Heart left ventricle (tissue), 16 donors: ENCODE measurements at regions of chr4 and their contacts with region 1.

Region 1: GRCh38 chr4:140109737-140110136 is 44.2 kb downstream of the MAML3 start:
- DNase-seq: no peak
- ATAC-seq: no peak
- H3K4me3 ChIP-seq: no peak overlapping the region
- H3K27ac ChIP-seq: no peak overlapping the region
- H3K4me1 ChIP-seq: no peaks in the 10 kb centered on the region
- H3K27me3 ChIP-seq: no peaks in the 10 kb centered on the region
- CTCF ChIP-seq: no peak
- POLR2A ChIP-seq: no peak

Region 2: DNA sequence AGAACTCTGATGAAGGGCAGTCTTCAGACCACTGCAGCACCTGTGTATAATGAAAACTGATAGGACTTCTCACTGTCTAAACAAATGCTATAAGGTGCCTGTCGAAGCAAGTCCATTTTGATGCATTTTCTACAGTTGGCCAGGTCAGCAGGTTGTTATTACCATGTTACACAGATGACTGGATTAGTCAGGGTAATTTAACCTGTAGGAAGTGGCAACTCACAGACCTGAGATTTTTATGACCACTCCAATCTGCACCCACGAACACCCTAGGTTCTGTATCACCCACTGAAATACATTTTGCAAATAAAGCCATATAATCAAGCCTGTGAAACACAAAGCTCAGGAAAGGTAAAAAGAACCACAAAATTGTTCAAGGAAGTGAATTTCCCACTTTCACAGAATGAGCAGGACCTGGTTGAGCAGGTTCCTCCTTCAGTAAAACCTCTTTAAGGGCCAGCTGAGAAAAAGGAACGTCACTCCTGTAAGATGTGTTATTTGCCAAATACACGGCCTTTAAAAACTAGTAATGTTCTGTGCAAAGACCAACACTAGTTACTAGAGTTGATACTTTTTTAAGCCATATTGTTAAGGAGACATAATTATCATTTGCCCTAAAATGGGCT is 31.6 kb after region 1 on chr4:
- intact Hi-C with region 1: loop called in 1 of 10 experiments (anchors 5 kb)
- DNase-seq: no peak
- ATAC-seq: no peak
- H3K4me3 ChIP-seq: no peak overlapping the region
- H3K27ac ChIP-seq: no peak overlapping the region
- H3K4me1 ChIP-seq: peaks cover 0 to 6% (median 0%) of the 10 kb centered on the region in 12 donors
- H3K27me3 ChIP-seq: no peaks in the 10 kb centered on the region
- CTCF ChIP-seq: no peak
- POLR2A ChIP-seq: no peak

Region 3: GRCh38 chr4:140286456-140286855 is 176.7 kb after region 1 on chr4:
- intact Hi-C with region 1: no loop called
- DNase-seq: no peak
- ATAC-seq: no peak
- H3K4me3 ChIP-seq: no peak overlapping the region
- H3K27ac ChIP-seq: no peak overlapping the region
- H3K4me1 ChIP-seq: no peaks in the 10 kb centered on the region
- H3K27me3 ChIP-seq: peaks cover 0 to 9% (median 0%) of the 10 kb centered on the region in 9 donors
- CTCF ChIP-seq: no peak
- POLR2A ChIP-seq: no peak